ENCODE measurements at regions of chr1 and their contacts with region 1.

Region 1: GRCh38 chr1:17236779-17237560 is 11.9 kb upstream of the PADI3 start:
- DNase-seq: peak; percentile 77
- H3K4me3 ChIP-seq: no peak overlapping the region
- H3K27ac ChIP-seq: no peak overlapping the region
- H3K4me1 ChIP-seq: peaks cover 18% of the 10 kb centered on the region
- H3K27me3 ChIP-seq: peaks cover 3% of the 10 kb centered on the region in 2 experiments
- CTCF ChIP-seq: peak; percentile 78 to 86
- POLR2A ChIP-seq: no peak

Region 2: DNA sequence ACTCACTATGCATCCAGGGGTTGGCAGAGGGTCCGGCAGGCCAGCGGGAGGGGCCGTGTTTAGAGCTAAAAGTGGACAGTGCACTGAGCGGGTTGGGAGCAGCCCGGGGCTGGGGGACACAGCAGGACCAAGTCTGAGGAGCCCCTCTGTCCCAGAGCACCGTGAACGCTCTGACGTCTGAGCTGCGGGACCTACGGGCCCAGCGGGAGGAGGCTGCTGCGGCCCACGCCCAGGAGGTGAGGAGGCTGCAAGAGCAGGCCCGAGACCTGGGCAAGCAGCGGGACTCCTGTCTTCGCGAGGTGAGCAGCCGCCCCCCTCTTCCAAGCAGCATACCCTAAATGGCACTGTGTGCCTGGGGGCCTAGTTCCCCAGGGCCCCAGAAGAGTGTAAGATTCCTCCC is 282.4 kb before region 1 on chr1:
- CTCF ChIA-PET with region 1: no interaction called
- POLR2A ChIA-PET with region 1: no interaction called
- dilution Hi-C with region 1: no loop called
- intact Hi-C with region 1: loop called (anchors 5 kb)
- DNase-seq: no peak
- H3K4me3 ChIP-seq: no peak overlapping the region
- H3K27ac ChIP-seq: no peak overlapping the region
- H3K4me1 ChIP-seq: no peaks in the 10 kb centered on the region
- H3K27me3 ChIP-seq: no peaks in the 10 kb centered on the region
- CTCF ChIP-seq: no peak
- POLR2A ChIP-seq: no peak

Region 3: GRCh38 chr1:17125756-17126237 is 111.2 kb before region 1 on chr1:
- CTCF ChIA-PET with region 1: interaction called, 261 read pairs
- POLR2A ChIA-PET with region 1: interaction called, 3 read pairs
- dilution Hi-C with region 1: no loop called
- intact Hi-C with region 1: loop called (anchors 1 kb)
- DNase-seq: peak; percentile 71
- H3K4me3 ChIP-seq: no peak overlapping the region
- H3K27ac ChIP-seq: no peak overlapping the region
- H3K4me1 ChIP-seq: peaks cover 30% of the 10 kb centered on the region
- H3K27me3 ChIP-seq: no peaks in the 10 kb centered on the region
- CTCF ChIP-seq: peak; percentile 93 to 96
- POLR2A ChIP-seq: no peak

Region 4: GRCh38 chr1:17274186-17275170 is 37.5 kb after region 1 on chr1:
- CTCF ChIA-PET with region 1: interaction called, 6 read pairs
- POLR2A ChIA-PET with region 1: no interaction called
- dilution Hi-C with region 1: no loop called
- intact Hi-C with region 1: loop called (anchors 1 kb)
- DNase-seq: peak; percentile 36
- H3K4me3 ChIP-seq: no peak overlapping the region
- H3K27ac ChIP-seq: no peak overlapping the region
- H3K4me1 ChIP-seq: no peaks in the 10 kb centered on the region
- H3K27me3 ChIP-seq: no peaks in the 10 kb centered on the region
- CTCF ChIP-seq: peak; percentile 72 to 91
- POLR2A ChIP-seq: no peak

Region 5: DNA sequence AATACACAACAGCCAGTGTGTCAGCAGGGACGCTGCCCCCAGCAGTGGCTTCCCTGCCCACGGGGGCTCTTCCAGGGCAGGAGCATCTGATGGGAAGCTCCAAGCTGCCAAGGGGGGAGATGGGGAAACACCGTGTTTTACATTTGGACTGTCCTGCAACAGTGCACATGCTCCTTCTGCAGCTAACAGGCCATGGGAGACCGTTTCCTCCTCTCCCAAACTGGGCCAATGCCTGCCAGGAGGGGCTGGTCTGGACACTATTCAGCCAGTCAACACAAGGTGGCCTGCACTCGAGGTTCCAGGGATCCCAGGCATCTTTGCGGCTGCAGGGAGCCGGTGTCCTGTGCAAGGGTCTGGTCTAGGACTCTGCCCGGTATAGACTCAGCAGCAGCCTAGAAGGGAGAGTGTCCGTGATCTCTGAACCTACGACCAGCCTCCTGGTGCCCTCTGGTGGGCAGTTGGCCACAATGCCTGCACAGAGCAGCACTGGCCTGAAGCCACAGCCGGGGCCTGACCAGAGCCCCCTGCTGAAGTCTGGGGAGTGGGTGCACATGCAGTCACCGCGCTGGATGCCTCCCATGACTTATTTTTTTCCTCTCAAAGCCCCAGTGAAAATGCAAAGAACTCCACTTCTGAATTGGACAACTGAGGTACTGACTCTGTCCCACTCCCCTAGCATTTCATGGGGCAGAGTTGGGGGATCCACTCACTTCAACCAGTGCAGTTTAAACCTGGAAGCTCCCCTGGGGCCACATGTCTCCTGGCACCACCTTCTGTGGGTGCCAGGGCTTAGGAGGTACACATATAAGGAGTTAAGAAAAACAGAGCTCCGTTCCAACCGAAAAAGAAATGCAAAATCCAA is 169.2 kb after region 1 on chr1:
- CTCF ChIA-PET with region 1: no interaction called
- POLR2A ChIA-PET with region 1: no interaction called
- dilution Hi-C with region 1: no loop called
- intact Hi-C with region 1: loop called (anchors 10 kb)
- DNase-seq: peak; percentile 44
- H3K4me3 ChIP-seq: no peak overlapping the region
- H3K27ac ChIP-seq: no peak overlapping the region
- H3K4me1 ChIP-seq: no peaks in the 10 kb centered on the region
- H3K27me3 ChIP-seq: no peaks in the 10 kb centered on the region
- CTCF ChIP-seq: peak; percentile 72 to 92
- POLR2A ChIP-seq: no peak